ENCODE measurements at regions of chr6 and their contacts with region 1.

Region 1: DNA sequence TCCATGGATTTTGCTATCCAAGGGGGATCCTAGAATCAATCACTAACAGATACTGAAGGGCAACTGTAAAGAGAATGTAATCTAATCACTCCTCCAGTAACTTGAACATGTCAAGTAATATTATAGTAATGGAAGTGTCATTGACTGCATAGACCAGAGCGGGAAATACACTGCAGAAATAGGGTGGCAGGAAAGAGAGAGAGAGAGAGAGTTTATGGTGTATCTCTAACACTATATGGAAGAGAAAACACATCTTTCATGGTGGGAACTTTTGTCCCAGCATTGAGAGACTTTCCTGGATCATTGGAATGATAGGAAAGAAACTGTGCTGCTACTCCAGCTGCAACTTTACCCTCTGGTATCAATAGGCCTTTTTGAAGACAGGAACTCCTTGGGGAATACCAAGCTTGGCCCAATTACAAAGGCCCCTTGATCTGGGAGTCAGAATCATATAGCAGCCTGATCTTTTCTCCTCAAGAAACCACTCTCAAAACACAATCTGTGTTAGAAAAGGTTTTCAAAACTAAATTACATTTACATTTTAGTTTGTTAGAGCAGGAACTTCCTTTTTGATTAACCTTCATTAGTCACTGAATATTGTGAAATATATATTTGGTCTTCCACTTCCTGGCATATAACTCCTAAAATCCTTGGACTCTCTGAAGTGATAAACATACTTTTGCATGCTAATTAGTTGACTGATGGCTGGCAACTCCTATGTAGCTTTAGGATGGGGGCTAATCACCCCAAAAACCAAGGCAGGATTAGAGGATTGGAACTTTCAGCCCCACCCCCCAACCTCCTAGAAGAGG is 29.5 kb upstream of the RNGTT start:
- DNase-seq: no peak
- ATAC-seq: no peak
- H3K4me3 ChIP-seq: no peak overlapping the region
- H3K4me3 Mint-ChIP-seq: no peak overlapping the region
- H3K27ac ChIP-seq: no peak overlapping the region
- H3K27ac Mint-ChIP-seq: no peak overlapping the region
- H3K4me1 ChIP-seq: no peaks in the 10 kb centered on the region
- H3K4me1 Mint-ChIP-seq: no peaks in the 10 kb centered on the region
- H3K27me3 ChIP-seq: no peaks in the 10 kb centered on the region
- H3K27me3 Mint-ChIP-seq: no peaks in the 10 kb centered on the region

Region 2: GRCh38 chr6:88443554-88443953 is 549.4 kb before region 1 on chr6:
- CTCF ChIA-PET with region 1: no interaction called
- POLR2A ChIA-PET with region 1: no interaction called
- DNase-seq: no peak
- ATAC-seq: no peak
- H3K4me3 ChIP-seq: no peak overlapping the region
- H3K4me3 Mint-ChIP-seq: no peak overlapping the region
- H3K27ac ChIP-seq: no peak overlapping the region
- H3K27ac Mint-ChIP-seq: no peak overlapping the region
- H3K4me1 ChIP-seq: no peaks in the 10 kb centered on the region
- H3K4me1 Mint-ChIP-seq: no peaks in the 10 kb centered on the region
- H3K27me3 ChIP-seq: no peaks in the 10 kb centered on the region
- H3K27me3 Mint-ChIP-seq: peaks cover 0 to 3% of the 10 kb centered on the region in 2 donors

Region 3: GRCh38 chr6:89330910-89331309 is 338.0 kb after region 1 on chr6:
- CTCF ChIA-PET with region 1: no interaction called
- POLR2A ChIA-PET with region 1: no interaction called
- DNase-seq: no peak
- ATAC-seq: no peak
- H3K4me3 ChIP-seq: no peak overlapping the region
- H3K4me3 Mint-ChIP-seq: no peak overlapping the region
- H3K27ac ChIP-seq: no peak overlapping the region
- H3K27ac Mint-ChIP-seq: no peak overlapping the region
- H3K4me1 ChIP-seq: no peaks in the 10 kb centered on the region
- H3K4me1 Mint-ChIP-seq: no peaks in the 10 kb centered on the region
- H3K27me3 ChIP-seq: no peaks in the 10 kb centered on the region
- H3K27me3 Mint-ChIP-seq: no peaks in the 10 kb centered on the region

Region 4: DNA sequence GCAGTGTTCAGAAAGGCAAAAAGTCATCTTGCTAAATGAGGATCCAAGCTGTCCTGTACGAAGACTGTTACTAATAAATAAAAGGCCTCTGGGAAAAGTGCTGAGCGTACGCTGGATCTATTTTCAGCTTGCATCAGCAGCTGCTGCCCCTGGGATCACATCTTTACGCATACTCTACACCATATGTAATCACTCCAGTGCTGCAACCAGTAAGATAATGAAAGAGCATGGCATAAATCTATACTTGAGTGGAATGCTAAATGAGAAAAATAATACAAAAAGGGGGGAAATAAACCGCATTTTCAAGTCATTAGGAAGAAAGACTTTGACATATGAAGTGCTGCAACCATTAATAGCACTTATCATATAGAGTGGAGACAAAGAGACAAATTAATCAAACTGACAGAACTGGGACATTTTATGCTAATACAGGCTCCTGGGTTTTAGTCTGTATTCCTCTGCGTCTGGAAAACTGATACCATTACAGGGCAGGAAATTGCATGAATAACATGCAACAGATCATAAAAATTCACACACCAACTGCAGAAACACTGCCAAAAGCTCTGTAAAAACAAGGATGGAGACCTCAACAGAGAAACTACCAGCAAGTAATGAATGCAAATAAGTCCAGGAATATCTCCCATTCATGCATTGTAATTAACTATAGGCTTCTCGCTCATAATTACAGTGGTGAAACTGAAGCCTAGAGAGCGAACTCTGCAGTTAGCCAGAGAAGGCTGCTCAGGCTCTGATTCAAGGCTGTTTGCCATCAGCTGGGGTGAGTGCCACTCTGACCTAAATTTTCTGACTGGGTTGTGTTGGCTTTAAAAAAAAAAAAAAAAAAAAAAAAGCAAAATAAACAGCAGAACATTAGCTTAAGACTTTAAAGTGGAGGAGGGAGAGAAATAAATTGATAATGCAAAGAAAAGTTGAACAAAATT is 985.1 kb after region 1 on chr6:
- CTCF ChIA-PET with region 1: no interaction called
- POLR2A ChIA-PET with region 1: interaction called in 1 of 2 experiments, 11 read pairs
- DNase-seq: no peak
- ATAC-seq: no peak
- H3K4me3 ChIP-seq: no peak overlapping the region
- H3K4me3 Mint-ChIP-seq: no peak overlapping the region
- H3K27ac ChIP-seq: no peak overlapping the region
- H3K27ac Mint-ChIP-seq: no peak overlapping the region
- H3K4me1 ChIP-seq: peaks cover 2 to 4% of the 10 kb centered on the region in 2 experiments
- H3K4me1 Mint-ChIP-seq: peaks cover 33 to 40% (median 39%) of the 10 kb centered on the region in 3 donors
- H3K27me3 ChIP-seq: no peaks in the 10 kb centered on the region
- H3K27me3 Mint-ChIP-seq: no peaks in the 10 kb centered on the region

Measured in T-cell (primary cell).